Aorta (tissue), 5 donors: ENCODE measurements at regions of chr1 and their contacts with region 1.

Region 1: DNA sequence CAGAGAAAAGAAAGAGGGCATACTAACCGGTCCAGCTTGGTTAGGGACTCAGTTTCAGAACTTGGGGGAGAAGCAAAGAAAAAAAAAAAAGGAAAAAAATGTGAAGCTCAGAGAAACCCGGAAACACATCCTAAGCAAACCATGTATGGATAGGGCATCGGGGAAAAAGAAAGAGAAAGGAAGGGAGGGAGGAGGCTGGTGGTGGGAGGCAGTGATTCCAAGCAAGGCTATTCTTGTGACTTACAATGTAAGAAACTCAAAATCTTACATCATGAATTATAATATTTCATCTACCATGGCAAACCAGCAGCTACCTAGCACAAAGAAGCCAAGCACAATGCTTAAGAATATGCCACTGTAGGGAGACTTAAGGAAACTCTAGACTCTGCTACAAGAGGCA is 60.3 kb downstream of the UBR4 start:
- DNase-seq: no peak
- ATAC-seq: no peak
- H3K4me3 ChIP-seq: no peak overlapping the region
- H3K27ac ChIP-seq: no peak overlapping the region
- H3K4me1 ChIP-seq: no peaks in the 10 kb centered on the region
- H3K27me3 ChIP-seq: no peaks in the 10 kb centered on the region

Region 2: DNA sequence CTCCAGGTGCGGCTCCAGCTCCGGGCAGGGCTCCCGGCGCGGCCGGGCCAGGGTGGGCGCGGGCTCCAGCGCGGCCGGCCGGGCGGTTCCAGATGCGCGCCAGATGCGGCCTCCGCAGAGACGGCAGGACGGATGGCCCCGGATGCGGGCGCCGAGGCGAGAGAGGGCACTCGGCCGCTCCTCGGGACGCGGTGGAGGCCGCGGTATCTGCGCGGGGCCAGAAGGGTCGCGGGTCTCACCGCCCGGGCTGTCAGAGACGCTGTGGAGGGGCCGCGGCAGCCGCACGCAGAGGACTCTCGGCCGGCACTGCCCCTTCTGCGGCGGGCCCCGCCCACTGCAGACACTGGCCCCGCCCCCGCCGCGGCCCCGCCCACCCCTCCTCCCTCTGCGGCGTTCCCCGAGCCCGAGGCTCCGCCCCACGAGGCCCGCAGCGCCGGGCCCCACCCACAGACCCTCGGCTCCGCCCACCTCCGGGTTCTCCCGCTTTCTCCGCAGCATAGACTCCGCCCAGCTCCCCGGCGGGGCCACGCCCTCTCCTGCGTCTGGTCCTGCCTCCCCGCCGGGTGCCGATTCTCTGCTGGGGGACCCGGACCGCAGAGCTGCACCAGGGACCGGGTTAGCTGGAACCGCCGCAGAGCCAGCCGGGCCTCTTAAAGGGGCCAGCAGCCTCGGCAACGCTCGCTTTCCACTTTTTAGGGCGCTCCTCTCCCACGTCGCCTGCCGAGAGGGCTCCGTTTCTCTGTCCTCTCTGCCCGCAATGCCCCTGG is 193.2 kb before region 1 on chr1 and contains the start of gene IFFO2:
- intact Hi-C with region 1: no loop called
- DNase-seq: peak; percentile 99 to 100
- ATAC-seq: peak; percentile 97
- H3K4me3 ChIP-seq: peak within 1 kb of the TSS; percentile 98
- H3K27ac ChIP-seq: peak within 1 kb of the TSS; percentile 15 to 58
- H3K4me1 ChIP-seq: no peaks in the 10 kb centered on the region
- H3K27me3 ChIP-seq: no peaks in the 10 kb centered on the region
- total RNA-seq, gene IFFO2: 21.5 to 34.7 TPM

Region 3: DNA sequence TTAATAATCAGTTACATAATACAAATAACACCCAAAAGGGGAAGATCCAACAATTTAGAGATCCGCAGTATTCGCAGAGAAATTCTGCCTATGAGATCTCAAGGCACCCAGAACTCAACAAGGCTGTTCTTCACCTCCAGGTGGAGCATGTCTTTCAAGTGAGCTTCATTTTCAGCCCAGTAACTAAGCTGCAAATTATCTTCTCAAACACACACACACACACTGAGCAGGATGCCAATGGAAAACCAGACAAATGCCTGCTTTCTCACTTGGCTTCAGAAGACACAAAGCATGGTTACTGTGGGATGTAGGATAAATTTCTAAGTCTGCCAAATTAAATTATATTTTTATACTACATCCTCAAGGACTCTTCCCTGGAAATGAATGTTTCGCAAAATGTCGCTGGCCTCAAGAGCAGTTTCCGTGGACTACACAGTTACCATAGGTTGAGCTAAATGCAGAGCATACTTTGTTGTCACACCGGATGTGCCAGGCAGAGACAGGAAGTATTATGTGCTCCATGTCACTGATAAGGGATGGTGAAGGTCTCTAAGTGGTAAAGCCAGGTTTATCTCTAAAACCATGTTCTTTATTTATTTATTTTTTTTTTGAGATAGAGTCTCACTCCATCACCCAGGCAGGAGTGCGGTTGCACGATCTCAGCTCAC is 30.0 kb after region 1 on chr1:
- intact Hi-C with region 1: loop called in 1 of 2 experiments (anchors 5 kb)
- DNase-seq: no peak
- ATAC-seq: no peak
- H3K4me3 ChIP-seq: no peak overlapping the region
- H3K27ac ChIP-seq: no peak overlapping the region
- H3K4me1 ChIP-seq: no peaks in the 10 kb centered on the region
- H3K27me3 ChIP-seq: no peaks in the 10 kb centered on the region

Region 4: DNA sequence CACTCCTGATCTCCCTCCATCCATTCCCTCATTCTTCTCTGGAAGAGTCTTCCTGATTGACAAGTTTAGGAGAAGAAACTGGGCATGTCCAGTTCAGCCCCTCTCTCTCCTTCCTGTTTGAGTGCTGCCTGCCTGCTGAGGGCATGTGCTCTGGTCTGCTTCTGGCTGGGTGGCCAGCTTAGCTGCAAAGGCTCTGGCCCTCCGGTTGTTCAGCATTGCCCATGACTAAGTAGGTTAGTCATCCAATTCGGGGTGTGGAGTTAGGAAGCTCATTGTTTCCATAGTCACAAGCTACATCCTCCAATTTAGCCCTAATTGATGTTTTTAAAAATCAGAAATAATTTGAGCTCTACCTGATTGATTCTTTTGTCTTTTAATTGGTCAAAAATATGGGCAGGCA is 799.3 kb after region 1 on chr1:
- intact Hi-C with region 1: no loop called
- DNase-seq: no peak
- ATAC-seq: no peak
- H3K4me3 ChIP-seq: no peak overlapping the region
- H3K27ac ChIP-seq: no peak overlapping the region
- H3K4me1 ChIP-seq: no peaks in the 10 kb centered on the region
- H3K27me3 ChIP-seq: peaks cover 0 to 2% of the 10 kb centered on the region in 2 donors